ENCODE measurements at regions of chr21 and their contacts with region 1.

Region 1: GRCh38 chr21:41121785-41122421 is 46.1 kb upstream of the BACE2 start:
- DNase-seq: peak; percentile 47
- CTCF ChIP-seq: peak; percentile 75

Region 2: GRCh38 chr21:41133896-41134522 is 12.1 kb after region 1 on chr21:
- CTCF ChIA-PET with region 1: interaction called, 19 read pairs
- POLR2A ChIA-PET with region 1: no interaction called
- DNase-seq: peak; percentile 59
- CTCF ChIP-seq: peak; percentile 60

Measured in GM10248 (cell line).